ENCODE measurements at regions of chr12 and their contacts with region 1.

Region 1: GRCh38 chr12:50297027-50297426 is 13.7 kb upstream of the LIMA1 start:
- DNase-seq: no peak

Region 2: DNA sequence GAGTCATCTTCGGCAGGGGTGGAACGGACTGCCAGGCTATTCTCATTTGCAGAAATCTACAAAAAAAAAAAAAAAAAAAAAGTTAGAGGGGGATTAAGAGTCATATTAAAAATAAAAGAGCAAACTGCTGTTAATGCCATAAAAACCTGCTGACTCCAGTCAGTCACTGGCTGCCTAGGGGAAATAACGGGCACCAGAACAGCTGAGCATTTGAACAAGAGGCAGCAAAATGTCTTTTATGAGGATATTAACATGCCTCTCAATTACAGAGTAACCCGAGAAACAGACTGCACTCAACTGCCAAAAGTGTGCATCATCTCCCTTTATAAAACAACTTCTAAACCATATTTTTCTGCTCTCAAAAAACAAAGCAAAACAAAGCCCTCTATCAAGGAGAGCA is 101.2 kb before region 1 on chr12:
- intact Hi-C with region 1: loop called in 1 of 2 experiments (anchors 10 kb)
- DNase-seq: no peak

Region 3: DNA sequence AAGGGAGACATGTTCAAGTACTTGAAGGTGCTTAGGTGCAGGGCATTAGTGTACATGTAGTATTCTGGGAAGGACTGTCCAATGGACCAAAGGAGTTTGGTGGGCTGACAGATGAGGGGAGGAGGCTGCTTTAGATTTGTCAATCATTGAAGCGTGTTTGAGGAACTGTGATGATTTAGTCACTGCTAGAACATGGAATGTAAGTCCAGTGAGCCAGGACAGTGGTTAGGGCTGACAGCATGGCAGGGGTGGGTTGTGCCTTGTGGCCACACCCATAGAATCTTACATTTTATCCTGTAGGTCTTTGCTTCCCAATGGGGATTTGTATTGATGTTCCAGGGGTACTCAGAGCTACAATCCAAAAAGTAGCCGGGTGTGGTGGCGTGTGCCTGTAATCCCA is 232.3 kb after region 1 on chr12:
- intact Hi-C with region 1: loop called in 1 of 2 experiments (anchors 5 kb)
- DNase-seq: no peak

Measured in posterior vena cava (tissue), 2 donors.